ENCODE measurements at regions of chr2 and their contacts with region 1.

Region 1: GRCh38 chr2:73385595-73386341 is at the start of gene ALMS1:
- DNase-seq: peak; percentile 76 to 96 (median 86)
- ATAC-seq: peak; percentile 88
- H3K4me3 ChIP-seq: peak within 1 kb of the TSS; percentile 75 to 88
- H3K4me3 Mint-ChIP-seq: peak within 1 kb of the TSS; percentile 88
- H3K27ac ChIP-seq: peak within 1 kb of the TSS; percentile 88 to 90
- H3K27ac Mint-ChIP-seq: peak within 1 kb of the TSS; percentile 94
- H3K4me1 ChIP-seq: peaks cover 20% of the 10 kb centered on the region
- H3K4me1 Mint-ChIP-seq: peaks cover 39% of the 10 kb centered on the region
- H3K27me3 ChIP-seq: no peaks in the 10 kb centered on the region
- H3K27me3 Mint-ChIP-seq: peaks cover 2% of the 10 kb centered on the region
- CTCF ChIP-seq: no peak
- total RNA-seq, gene ALMS1: 14.8 to 16.4 TPM

Region 2: GRCh38 chr2:71831193-71831577 is 1554.6 kb before region 1 on chr2:
- CTCF ChIA-PET with region 1: no interaction called
- POLR2A ChIA-PET with region 1: no interaction called
- intact Hi-C with region 1: no loop called
- DNase-seq: no peak
- ATAC-seq: no peak
- H3K4me3 ChIP-seq: no peak overlapping the region
- H3K4me3 Mint-ChIP-seq: no peak overlapping the region
- H3K27ac ChIP-seq: no peak overlapping the region
- H3K27ac Mint-ChIP-seq: no peak overlapping the region
- H3K4me1 ChIP-seq: no peaks in the 10 kb centered on the region
- H3K4me1 Mint-ChIP-seq: no peaks in the 10 kb centered on the region
- H3K27me3 ChIP-seq: no peaks in the 10 kb centered on the region
- H3K27me3 Mint-ChIP-seq: no peaks in the 10 kb centered on the region
- CTCF ChIP-seq: no peak

Region 3: GRCh38 chr2:72825241-72826155 is 560.3 kb before region 1 on chr2 and contains the start of gene EXOC6B:
- CTCF ChIA-PET with region 1: no interaction called
- POLR2A ChIA-PET with region 1: no interaction called
- intact Hi-C with region 1: loop called (anchors 2 to 10 kb)
- DNase-seq: peak; percentile 67 to 91 (median 89)
- ATAC-seq: peak; percentile 89
- H3K4me3 ChIP-seq: peak within 1 kb of the TSS; percentile 70 to 88
- H3K4me3 Mint-ChIP-seq: peak within 1 kb of the TSS; percentile 98
- H3K27ac ChIP-seq: peak within 1 kb of the TSS; percentile 31 to 65
- H3K27ac Mint-ChIP-seq: peak within 1 kb of the TSS; percentile 96
- H3K4me1 ChIP-seq: peaks cover 20% of the 10 kb centered on the region
- H3K4me1 Mint-ChIP-seq: peaks cover 44% of the 10 kb centered on the region
- H3K27me3 ChIP-seq: no peaks in the 10 kb centered on the region
- H3K27me3 Mint-ChIP-seq: peaks cover 11% of the 10 kb centered on the region
- CTCF ChIP-seq: no peak
- total RNA-seq, gene EXOC6B: 13.1 to 14.9 TPM

Region 4: GRCh38 chr2:73225513-73226360 is 160.0 kb before region 1 on chr2:
- CTCF ChIA-PET with region 1: no interaction called
- POLR2A ChIA-PET with region 1: no interaction called
- intact Hi-C with region 1: no loop called
- DNase-seq: no peak
- ATAC-seq: no peak
- H3K4me3 ChIP-seq: no peak overlapping the region
- H3K4me3 Mint-ChIP-seq: no peak overlapping the region
- H3K27ac ChIP-seq: no peak overlapping the region
- H3K27ac Mint-ChIP-seq: no peak overlapping the region
- H3K4me1 ChIP-seq: no peaks in the 10 kb centered on the region
- H3K4me1 Mint-ChIP-seq: no peaks in the 10 kb centered on the region
- H3K27me3 ChIP-seq: no peaks in the 10 kb centered on the region
- H3K27me3 Mint-ChIP-seq: no peaks in the 10 kb centered on the region
- CTCF ChIP-seq: no peak

Region 5: GRCh38 chr2:73284296-73285158 is 101.2 kb before region 1 on chr2 and contains the start of gene FBXO41:
- CTCF ChIA-PET with region 1: no interaction called
- POLR2A ChIA-PET with region 1: interaction called, 3 read pairs
- intact Hi-C with region 1: loop called in 1 of 2 experiments (anchors 1 kb)
- DNase-seq: peak; percentile 26 to 87 (median 68)
- ATAC-seq: peak; percentile 84
- H3K4me3 ChIP-seq: peak within 1 kb of the TSS; percentile 77 to 81
- H3K4me3 Mint-ChIP-seq: peak within 1 kb of the TSS; percentile 91
- H3K27ac ChIP-seq: peak within 1 kb of the TSS; percentile 61 to 74
- H3K27ac Mint-ChIP-seq: peak within 1 kb of the TSS; percentile 75
- H3K4me1 ChIP-seq: peaks cover 20% of the 10 kb centered on the region
- H3K4me1 Mint-ChIP-seq: peaks cover 24% of the 10 kb centered on the region
- H3K27me3 ChIP-seq: no peaks in the 10 kb centered on the region
- H3K27me3 Mint-ChIP-seq: peaks cover 8% of the 10 kb centered on the region
- CTCF ChIP-seq: no peak
- total RNA-seq, gene FBXO41: 22.1 to 23.6 TPM

Region 6: DNA sequence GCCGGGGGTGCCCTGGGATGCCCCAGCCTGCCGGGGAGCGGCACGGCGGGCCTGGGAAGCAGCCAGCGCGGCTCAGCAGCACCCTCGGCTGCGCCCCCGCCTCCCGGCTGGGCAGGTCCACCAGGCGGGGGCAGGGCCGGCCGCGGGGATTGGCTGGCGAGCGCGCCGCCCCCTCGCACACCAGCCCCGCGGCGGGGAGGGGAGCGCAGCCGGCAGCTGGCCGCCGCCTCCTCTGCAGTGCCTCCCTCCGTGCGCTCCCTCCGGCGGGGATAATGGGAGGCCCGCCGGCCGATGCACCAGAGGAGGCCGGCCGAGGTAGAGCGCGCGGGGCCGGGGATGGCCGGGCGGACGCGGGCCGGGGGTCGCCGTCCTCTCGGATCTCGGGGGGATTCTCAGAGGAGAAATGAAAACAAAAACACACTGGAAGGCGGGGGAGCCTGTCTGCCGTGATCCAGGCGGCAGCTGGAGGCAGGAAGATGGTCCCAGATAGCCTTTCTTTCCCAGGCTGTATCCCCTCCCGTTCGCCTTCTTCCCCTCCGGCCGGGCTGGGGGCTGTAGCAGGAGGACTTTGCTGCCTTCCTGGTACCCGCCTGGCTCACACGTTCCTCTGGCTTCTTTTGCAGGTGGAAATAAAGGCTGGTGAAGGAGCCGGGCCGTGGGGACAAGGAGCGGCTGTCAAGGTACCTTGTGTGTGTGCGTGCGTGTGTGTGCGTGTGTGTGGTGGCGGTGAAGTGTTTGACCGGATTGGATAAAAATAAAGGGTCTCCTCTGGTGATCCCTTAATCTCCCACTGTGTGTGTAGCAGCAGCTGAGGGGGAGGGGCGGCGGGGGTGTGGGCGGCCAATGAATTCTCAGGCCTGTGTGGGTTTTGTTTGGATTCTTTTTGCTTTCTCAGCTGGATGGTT is 617.0 kb after region 1 on chr2:
- CTCF ChIA-PET with region 1: no interaction called
- POLR2A ChIA-PET with region 1: no interaction called
- intact Hi-C with region 1: loop called in 1 of 2 experiments (anchors 5 kb)
- DNase-seq: peak; percentile 54 to 91 (median 79)
- ATAC-seq: peak; percentile 94
- H3K4me3 ChIP-seq: peak overlapping the region; percentile 50 to 52
- H3K4me3 Mint-ChIP-seq: peak overlapping the region; percentile 88
- H3K27ac ChIP-seq: peak overlapping the region in 1 of 2 experiments; percentile 66
- H3K27ac Mint-ChIP-seq: peak overlapping the region; percentile 69
- H3K4me1 ChIP-seq: peaks cover 36% of the 10 kb centered on the region
- H3K4me1 Mint-ChIP-seq: peaks cover 76% of the 10 kb centered on the region
- H3K27me3 ChIP-seq: no peaks in the 10 kb centered on the region
- H3K27me3 Mint-ChIP-seq: no peaks in the 10 kb centered on the region
- CTCF ChIP-seq: no peak

Region 7: GRCh38 chr2:74653985-74654882 is 1268.5 kb after region 1 on chr2 and contains the start of gene SEMA4F:
- CTCF ChIA-PET with region 1: no interaction called
- POLR2A ChIA-PET with region 1: no interaction called
- intact Hi-C with region 1: loop called in 1 of 2 experiments (anchors 10 kb)
- DNase-seq: peak; percentile 85 to 96 (median 93)
- ATAC-seq: peak; percentile 99
- H3K4me3 ChIP-seq: peak within 1 kb of the TSS; percentile 76 to 78
- H3K4me3 Mint-ChIP-seq: peak within 1 kb of the TSS; percentile 90
- H3K27ac ChIP-seq: peak within 1 kb of the TSS in 1 of 2 experiments; percentile 48
- H3K27ac Mint-ChIP-seq: peak within 1 kb of the TSS; percentile 79
- H3K4me1 ChIP-seq: peaks cover 12% of the 10 kb centered on the region
- H3K4me1 Mint-ChIP-seq: peaks cover 19% of the 10 kb centered on the region
- H3K27me3 ChIP-seq: no peaks in the 10 kb centered on the region
- H3K27me3 Mint-ChIP-seq: peaks cover 11% of the 10 kb centered on the region
- CTCF ChIP-seq: no peak
- total RNA-seq, gene SEMA4F: 4.6 to 5.9 TPM

Measured in CD8-positive, alpha-beta T cell (primary cell).